ENCODE measurements at regions of chr2 and their contacts with region 1.

Region 1: GRCh38 chr2:174682578-174683391 is 81.5 kb downstream of the CHRNA1 start:
- DNase-seq: peak; percentile 76 to 88 (median 83)
- ATAC-seq: peak; percentile 57 to 92 (median 78)
- H3K4me3 ChIP-seq: peak overlapping the region; percentile 64 to 97 (median 86)
- H3K27ac ChIP-seq: peak overlapping the region; percentile 82 to 96 (median 88)
- H3K4me1 ChIP-seq: peaks cover 0 to 41% (median 26%) of the 10 kb centered on the region in 12 donors
- H3K27me3 ChIP-seq: no peaks in the 10 kb centered on the region
- CTCF ChIP-seq: no peak
- POLR2A ChIP-seq: no peak

Region 2: GRCh38 chr2:174561283-174561971 is 121.4 kb before region 1 on chr2:
- intact Hi-C with region 1: loop called in 1 of 10 experiments (anchors 5 kb)
- DNase-seq: peak; percentile 77 to 82 (median 80)
- ATAC-seq: peak; percentile 91 to 98 (median 97)
- H3K4me3 ChIP-seq: peak overlapping the region in 4 of 12 donors; percentile 2 to 19 (median 13)
- H3K27ac ChIP-seq: peak overlapping the region in 11 of 12 donors; percentile 41 to 72 (median 60)
- H3K4me1 ChIP-seq: peaks cover 6 to 24% (median 16%) of the 10 kb centered on the region in 12 donors
- H3K27me3 ChIP-seq: no peaks in the 10 kb centered on the region
- CTCF ChIP-seq: no peak
- POLR2A ChIP-seq: no peak

Region 3: GRCh38 chr2:174577967-174578589 is 104.7 kb before region 1 on chr2:
- intact Hi-C with region 1: loop called in 5 of 10 experiments (anchors 5 to 10 kb)
- DNase-seq: no peak
- ATAC-seq: peak in 2 of 4 donors; percentile 48 to 50
- H3K4me3 ChIP-seq: no peak overlapping the region
- H3K27ac ChIP-seq: no peak overlapping the region
- H3K4me1 ChIP-seq: peaks cover 0 to 43% (median 4%) of the 10 kb centered on the region in 12 donors
- H3K27me3 ChIP-seq: no peaks in the 10 kb centered on the region
- CTCF ChIP-seq: peak in 11 of 12 donors; percentile 19 to 54 (median 42)
- POLR2A ChIP-seq: no peak

Region 4: DNA sequence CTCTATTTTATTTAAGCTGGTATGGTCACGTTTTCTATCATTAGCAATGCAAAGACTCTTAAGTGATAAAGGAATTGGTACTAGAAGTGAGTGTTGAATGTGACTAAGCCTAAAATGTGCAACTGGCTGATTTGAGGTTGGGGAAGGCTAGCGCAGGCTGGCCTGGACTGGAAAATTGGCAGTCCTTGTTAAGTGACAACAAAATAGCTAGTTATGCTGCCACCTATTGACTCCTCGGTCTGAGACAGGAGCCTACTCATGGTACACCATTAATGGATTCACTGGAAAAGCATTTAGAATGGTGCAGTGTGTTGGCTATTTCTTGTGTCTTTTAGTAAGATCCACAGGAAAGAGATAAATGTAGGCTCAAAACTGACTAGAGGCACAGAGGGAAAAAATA is 79.5 kb before region 1 on chr2:
- intact Hi-C with region 1: loop called in 3 of 10 experiments (anchors 5 to 10 kb)
- DNase-seq: peak in 4 of 5 donors; percentile 45 to 68 (median 62)
- ATAC-seq: peak; percentile 80 to 94 (median 93)
- H3K4me3 ChIP-seq: no peak overlapping the region
- H3K27ac ChIP-seq: peak overlapping the region in 1 of 12 donors; percentile 54
- H3K4me1 ChIP-seq: peaks cover 0 to 75% (median 3%) of the 10 kb centered on the region in 12 donors
- H3K27me3 ChIP-seq: no peaks in the 10 kb centered on the region
- CTCF ChIP-seq: peak; percentile 43 to 77 (median 60)
- POLR2A ChIP-seq: no peak

Region 5: GRCh38 chr2:174615871-174616436 is 66.8 kb before region 1 on chr2:
- intact Hi-C with region 1: loop called in 2 of 10 experiments (anchors 5 to 10 kb)
- DNase-seq: peak in 1 of 5 donors; percentile 53
- ATAC-seq: peak in 3 of 4 donors; percentile 61 to 74 (median 65)
- H3K4me3 ChIP-seq: no peak overlapping the region
- H3K27ac ChIP-seq: peak overlapping the region in 5 of 12 donors; percentile 9 to 61 (median 31)
- H3K4me1 ChIP-seq: peaks cover 0 to 73% (median 14%) of the 10 kb centered on the region in 12 donors
- H3K27me3 ChIP-seq: no peaks in the 10 kb centered on the region
- CTCF ChIP-seq: no peak
- POLR2A ChIP-seq: no peak

Region 6: GRCh38 chr2:174634130-174635014 is 48.4 kb before region 1 on chr2:
- intact Hi-C with region 1: loop called in 2 of 10 experiments (anchors 5 to 10 kb)
- DNase-seq: no peak
- ATAC-seq: peak; percentile 55 to 76 (median 64)
- H3K4me3 ChIP-seq: peak overlapping the region in 10 of 12 donors; percentile 2 to 63 (median 30)
- H3K27ac ChIP-seq: peak overlapping the region; percentile 11 to 94 (median 39)
- H3K4me1 ChIP-seq: peaks cover 0 to 75% (median 31%) of the 10 kb centered on the region in 12 donors
- H3K27me3 ChIP-seq: no peaks in the 10 kb centered on the region
- CTCF ChIP-seq: no peak
- POLR2A ChIP-seq: no peak

Region 7: DNA sequence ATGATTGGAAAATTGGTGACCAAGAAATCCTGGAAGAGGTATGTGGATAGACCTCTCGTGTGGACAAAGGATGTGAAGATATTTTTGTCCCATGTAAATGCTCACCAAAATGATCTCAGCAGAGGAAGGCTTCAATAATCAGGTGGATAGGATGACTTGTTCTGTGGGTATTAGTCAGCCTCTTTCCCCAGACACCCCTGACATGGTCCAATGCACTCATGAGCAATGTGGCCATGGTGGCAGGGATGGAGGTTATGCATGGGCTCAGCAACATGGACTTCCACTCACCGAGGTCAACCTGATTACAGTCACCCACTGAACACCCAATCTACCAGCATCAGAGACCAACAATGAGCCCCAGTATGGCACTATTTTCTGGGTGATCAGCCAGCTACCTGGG is 61.3 kb after region 1 on chr2:
- intact Hi-C with region 1: no loop called
- DNase-seq: no peak
- ATAC-seq: no peak
- H3K4me3 ChIP-seq: no peak overlapping the region
- H3K27ac ChIP-seq: no peak overlapping the region
- H3K4me1 ChIP-seq: no peaks in the 10 kb centered on the region
- H3K27me3 ChIP-seq: no peaks in the 10 kb centered on the region
- CTCF ChIP-seq: no peak
- POLR2A ChIP-seq: no peak

Region 8: DNA sequence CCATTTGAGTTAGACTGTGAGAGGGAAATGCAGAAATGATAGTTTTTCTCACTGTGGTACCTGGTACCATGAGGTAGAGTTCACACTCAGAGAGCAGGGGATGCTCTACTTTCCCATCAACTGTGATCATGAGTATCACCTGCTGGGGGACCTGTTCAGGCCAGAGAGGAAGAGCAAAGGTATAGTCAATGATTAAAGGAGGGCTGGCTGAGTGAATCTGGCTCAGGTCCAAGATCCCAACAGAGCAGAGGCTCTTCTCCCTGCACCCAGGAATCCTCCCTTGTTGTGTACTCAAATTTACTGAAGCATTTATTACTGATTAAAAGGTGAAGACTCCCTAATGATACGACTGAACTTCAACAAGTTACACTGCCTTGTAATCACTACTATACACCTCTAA is 186.1 kb after region 1 on chr2:
- intact Hi-C with region 1: no loop called
- DNase-seq: no peak
- ATAC-seq: no peak
- H3K4me3 ChIP-seq: no peak overlapping the region
- H3K27ac ChIP-seq: no peak overlapping the region
- H3K4me1 ChIP-seq: peaks cover 0 to 14% (median 0%) of the 10 kb centered on the region in 12 donors
- H3K27me3 ChIP-seq: no peaks in the 10 kb centered on the region
- CTCF ChIP-seq: no peak
- POLR2A ChIP-seq: no peak